ENCODE measurements at regions of chr5 and their contacts with region 1.

Region 1: GRCh38 chr5:87452837-87453236 is 40.1 kb upstream of the CCNH start:
- DNase-seq: no peak
- H3K4me3 ChIP-seq: no peak overlapping the region
- H3K4me3 Mint-ChIP-seq: no peak overlapping the region
- H3K27ac Mint-ChIP-seq: no peak overlapping the region
- H3K4me1 ChIP-seq: no peaks in the 10 kb centered on the region
- H3K4me1 Mint-ChIP-seq: no peaks in the 10 kb centered on the region
- H3K27me3 ChIP-seq: no peaks in the 10 kb centered on the region
- H3K27me3 Mint-ChIP-seq: peaks cover 5% of the 10 kb centered on the region
- CTCF ChIP-seq: no peak

Region 2: DNA sequence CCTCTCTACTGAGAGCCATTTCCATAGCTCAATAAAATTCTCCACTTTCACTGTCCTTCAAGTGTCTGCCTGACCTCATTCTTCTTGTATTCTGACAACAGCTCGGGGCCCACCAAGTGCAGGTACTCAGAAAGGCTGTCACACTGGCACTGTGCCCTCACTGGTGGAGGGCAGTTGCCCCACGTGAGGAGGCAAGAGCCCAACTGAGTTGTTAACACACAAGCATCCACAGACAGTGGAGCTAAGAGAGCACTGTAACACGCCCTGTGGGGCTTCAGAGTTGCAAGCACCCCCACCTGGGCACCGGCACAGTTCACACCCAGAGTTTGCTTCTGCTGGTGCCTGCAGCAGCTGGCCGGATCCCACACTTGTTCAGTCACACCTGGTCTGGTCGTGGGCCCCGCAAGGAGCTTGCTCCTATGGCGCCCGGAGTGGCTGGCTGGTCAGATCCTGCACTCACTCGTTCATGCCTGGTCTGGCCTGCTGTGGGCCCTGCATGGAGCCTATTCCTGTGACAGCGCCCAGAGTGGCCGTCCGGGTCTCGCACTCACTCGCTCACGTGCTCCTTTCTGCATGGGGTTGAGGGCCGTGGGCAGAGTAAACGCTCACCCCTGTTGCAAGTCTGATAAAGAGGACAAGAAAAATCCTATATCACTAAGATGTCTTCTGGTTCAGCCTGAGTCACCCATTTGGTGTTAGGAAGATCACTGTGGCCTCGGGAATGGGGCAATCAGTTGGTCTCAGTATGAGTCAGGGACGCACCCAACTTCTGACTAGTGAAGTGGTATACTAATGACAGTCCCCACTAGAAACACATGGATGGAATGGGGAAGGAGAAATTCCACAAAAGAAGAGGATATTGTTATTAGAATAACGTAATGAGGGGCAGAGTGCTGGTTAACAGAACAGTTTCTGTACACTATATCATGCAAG is 46.9 kb after region 1 on chr5:
- CTCF ChIA-PET with region 1: no interaction called
- POLR2A ChIA-PET with region 1: no interaction called
- intact Hi-C with region 1: loop called (anchors 1 kb)
- DNase-seq: no peak
- H3K4me3 ChIP-seq: no peak overlapping the region
- H3K4me3 Mint-ChIP-seq: no peak overlapping the region
- H3K27ac Mint-ChIP-seq: no peak overlapping the region
- H3K4me1 ChIP-seq: no peaks in the 10 kb centered on the region
- H3K4me1 Mint-ChIP-seq: no peaks in the 10 kb centered on the region
- H3K27me3 ChIP-seq: no peaks in the 10 kb centered on the region
- H3K27me3 Mint-ChIP-seq: peaks cover 2% of the 10 kb centered on the region
- CTCF ChIP-seq: no peak

Region 3: GRCh38 chr5:87570366-87570765 is 117.5 kb after region 1 on chr5:
- CTCF ChIA-PET with region 1: no interaction called
- POLR2A ChIA-PET with region 1: no interaction called
- intact Hi-C with region 1: no loop called
- DNase-seq: no peak
- H3K4me3 ChIP-seq: no peak overlapping the region
- H3K4me3 Mint-ChIP-seq: no peak overlapping the region
- H3K27ac Mint-ChIP-seq: no peak overlapping the region
- H3K4me1 ChIP-seq: no peaks in the 10 kb centered on the region
- H3K4me1 Mint-ChIP-seq: no peaks in the 10 kb centered on the region
- H3K27me3 ChIP-seq: no peaks in the 10 kb centered on the region
- H3K27me3 Mint-ChIP-seq: peaks cover 6% of the 10 kb centered on the region
- CTCF ChIP-seq: no peak